Esophagus muscularis mucosa (tissue), 4 donors: ENCODE measurements at regions of chr17 and their contacts with region 1.

Region 1: DNA sequence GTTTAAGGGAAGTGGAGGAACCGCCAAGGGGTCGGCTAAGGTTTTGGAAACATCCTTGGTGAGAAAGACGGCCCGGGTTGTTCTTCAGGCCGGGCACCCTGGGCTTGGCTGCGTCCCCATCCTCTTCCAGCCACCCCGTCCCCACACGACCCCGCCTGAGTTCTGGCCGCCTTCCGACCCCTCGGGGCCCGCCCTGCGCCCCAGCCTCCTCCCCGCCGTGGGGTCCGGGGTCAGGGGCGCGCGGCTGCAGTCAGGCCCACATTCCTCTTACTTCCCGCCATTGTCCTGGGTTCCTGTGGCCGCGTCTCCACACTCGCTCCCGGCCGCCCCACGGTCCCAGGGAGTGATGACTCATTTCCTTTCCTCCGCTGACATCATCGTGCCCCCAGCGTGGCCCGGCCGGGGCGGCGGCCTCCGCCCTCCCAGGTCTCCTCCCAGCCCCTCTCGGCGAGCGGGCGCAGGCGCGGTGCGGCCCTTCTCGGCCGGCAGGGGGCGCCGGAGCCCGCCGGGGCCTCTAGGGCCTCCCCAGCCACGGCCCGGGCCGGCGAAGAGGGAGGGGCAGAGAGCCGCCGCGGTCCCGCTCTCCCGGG is 59.6 kb downstream of the WSB1 start:
- DNase-seq: peak; percentile 97
- H3K4me3 ChIP-seq: peak overlapping the region; percentile 66 to 77 (median 71)
- H3K27ac ChIP-seq: peak overlapping the region; percentile 90 to 97 (median 94)
- H3K4me1 ChIP-seq: peaks cover 23 to 32% (median 28%) of the 10 kb centered on the region in 4 donors
- H3K27me3 ChIP-seq: no peaks in the 10 kb centered on the region
- CTCF ChIP-seq: peak in 2 of 3 experiments; percentile 99
- EP300 ChIP-seq: no peak
- POLR2A ChIP-seq: peak; percentile 70

Region 2: DNA sequence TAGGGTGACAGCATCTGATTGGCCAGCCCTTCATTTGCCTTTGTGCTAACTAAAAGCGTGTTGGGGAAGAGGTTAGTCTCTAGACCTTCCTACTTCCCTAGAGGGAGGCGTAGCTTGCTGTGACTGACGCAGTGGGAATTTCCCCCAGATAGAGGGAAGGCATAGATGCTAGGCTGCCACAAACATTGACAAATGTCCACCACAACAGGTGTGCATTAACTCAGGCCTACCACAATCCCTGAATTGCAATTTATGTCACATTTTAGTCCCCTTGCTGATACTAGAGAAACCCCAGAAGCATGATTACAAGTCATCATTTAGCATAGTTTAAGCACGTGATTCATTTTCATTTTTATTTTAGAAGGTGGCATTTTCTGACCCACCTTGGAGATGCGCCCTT is 135.9 kb before region 1 on chr17:
- intact Hi-C with region 1: no loop called
- DNase-seq: no peak
- H3K4me3 ChIP-seq: no peak overlapping the region
- H3K27ac ChIP-seq: no peak overlapping the region
- H3K4me1 ChIP-seq: no peaks in the 10 kb centered on the region
- H3K27me3 ChIP-seq: no peaks in the 10 kb centered on the region
- CTCF ChIP-seq: no peak
- EP300 ChIP-seq: no peak
- POLR2A ChIP-seq: no peak

Region 3: DNA sequence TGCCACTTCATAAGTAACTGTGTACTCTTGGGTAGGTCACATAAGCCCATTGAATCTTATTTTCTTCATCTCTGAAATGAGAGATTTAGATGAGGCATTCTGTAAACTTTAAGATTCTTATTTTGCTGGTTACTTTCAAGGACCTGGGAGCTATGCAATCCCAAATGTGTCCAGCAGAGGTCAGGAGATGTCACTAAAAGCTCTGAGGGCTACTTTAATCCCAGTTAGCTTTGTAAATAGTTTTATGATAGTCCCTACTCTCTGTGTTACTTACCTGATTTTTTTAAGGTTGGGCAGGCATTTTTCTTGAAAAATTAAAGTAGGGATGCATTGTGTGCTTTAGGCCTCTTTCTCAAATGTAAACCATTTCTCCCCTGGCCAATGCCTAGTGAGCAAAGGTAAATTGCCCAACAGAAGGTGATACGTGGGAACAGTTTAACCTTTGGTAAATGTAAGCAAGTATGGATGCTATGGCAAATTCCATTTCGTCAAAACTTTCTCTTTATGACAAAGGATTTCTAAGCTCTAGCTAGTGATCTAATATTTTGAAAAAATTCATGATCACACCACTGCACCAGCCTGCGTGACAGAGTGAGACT is 116.7 kb before region 1 on chr17:
- intact Hi-C with region 1: loop called (anchors 5 kb)
- DNase-seq: no peak
- H3K4me3 ChIP-seq: no peak overlapping the region
- H3K27ac ChIP-seq: no peak overlapping the region
- H3K4me1 ChIP-seq: peaks cover 0 to 33% (median 11%) of the 10 kb centered on the region in 4 donors
- H3K27me3 ChIP-seq: no peaks in the 10 kb centered on the region
- CTCF ChIP-seq: peak; percentile 91 to 95 (median 94)
- EP300 ChIP-seq: no peak
- POLR2A ChIP-seq: no peak

Region 4: GRCh38 chr17:27293898-27294688 is 59.5 kb before region 1 on chr17 and contains the start of gene WSB1:
- intact Hi-C with region 1: loop called (anchors 5 kb)
- DNase-seq: peak; percentile 98
- H3K4me3 ChIP-seq: peak within 1 kb of the TSS; percentile 85 to 98 (median 90)
- H3K27ac ChIP-seq: peak within 1 kb of the TSS; percentile 99 to 100 (median 100)
- H3K4me1 ChIP-seq: peaks cover 28 to 41% (median 35%) of the 10 kb centered on the region in 4 donors
- H3K27me3 ChIP-seq: no peaks in the 10 kb centered on the region
- CTCF ChIP-seq: no peak
- EP300 ChIP-seq: peak; percentile 11
- POLR2A ChIP-seq: peak; percentile 95
- total RNA-seq, gene WSB1: 84.1 to 125 (median 118) TPM

Region 5: DNA sequence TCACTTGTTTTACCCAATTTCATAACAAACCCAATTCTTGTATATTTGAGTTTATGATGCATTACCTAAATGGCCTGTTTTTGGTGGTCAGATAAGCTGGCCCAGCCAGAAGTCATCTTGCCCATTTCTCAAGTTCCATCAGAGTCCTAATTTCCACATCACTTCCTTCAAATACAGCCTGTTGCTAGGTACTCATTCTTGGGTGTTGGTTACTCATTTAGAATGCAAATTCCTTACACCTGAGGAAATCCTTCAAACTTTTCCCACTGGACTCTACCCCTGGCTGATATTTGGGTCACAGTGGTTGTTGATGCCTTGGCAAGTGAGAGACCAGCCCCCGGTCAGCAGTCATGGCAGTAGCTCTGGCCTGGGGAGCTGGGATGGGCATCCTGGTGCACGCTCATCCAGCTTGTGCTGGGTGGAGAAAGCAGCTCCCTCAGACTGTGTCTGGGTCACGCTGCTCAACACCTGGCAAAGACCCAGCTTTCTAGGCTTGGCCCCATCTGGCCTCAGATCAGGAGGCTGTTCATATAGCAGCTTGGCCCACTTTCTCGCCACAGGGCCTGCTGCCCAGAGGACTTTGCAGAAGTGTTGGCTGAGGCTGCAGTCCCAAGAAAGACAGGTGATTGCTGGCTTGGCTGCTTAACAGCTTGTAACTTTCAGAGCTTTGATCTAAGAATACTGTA is 33.9 kb before region 1 on chr17:
- intact Hi-C with region 1: no loop called
- DNase-seq: peak; percentile 92
- H3K4me3 ChIP-seq: no peak overlapping the region
- H3K27ac ChIP-seq: peak overlapping the region; percentile 68 to 84 (median 76)
- H3K4me1 ChIP-seq: peaks cover 39 to 80% (median 69%) of the 10 kb centered on the region in 4 donors
- H3K27me3 ChIP-seq: no peaks in the 10 kb centered on the region
- CTCF ChIP-seq: no peak
- EP300 ChIP-seq: no peak
- POLR2A ChIP-seq: no peak

Region 6: DNA sequence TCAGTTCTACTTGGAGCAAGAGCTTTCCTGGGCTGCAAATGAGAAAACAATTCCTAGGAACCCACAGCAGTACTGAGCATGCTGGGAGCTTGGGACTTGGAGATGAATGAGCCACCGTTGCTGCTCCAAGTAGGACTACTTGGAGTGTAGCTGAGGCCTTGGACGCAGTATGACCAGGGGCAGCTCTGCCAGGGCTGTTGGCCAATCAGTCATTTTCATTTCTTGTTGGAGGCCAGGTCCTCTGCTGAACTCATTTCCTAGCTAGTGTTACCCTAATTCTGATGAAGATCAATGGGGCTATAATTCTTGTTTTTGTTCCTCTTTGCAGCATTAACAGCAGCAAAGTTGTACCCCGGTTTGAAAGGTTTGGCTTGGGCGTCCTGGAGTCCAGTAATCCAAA is 269.4 kb after region 1 on chr17:
- intact Hi-C with region 1: no loop called
- DNase-seq: no peak
- H3K4me3 ChIP-seq: no peak overlapping the region
- H3K27ac ChIP-seq: no peak overlapping the region
- H3K4me1 ChIP-seq: peaks cover 0 to 6% (median 3%) of the 10 kb centered on the region in 4 donors
- H3K27me3 ChIP-seq: no peaks in the 10 kb centered on the region
- CTCF ChIP-seq: no peak
- EP300 ChIP-seq: no peak
- POLR2A ChIP-seq: no peak